Keratinocyte (primary cell): ENCODE measurements at regions of chr4 and their contacts with region 1.

Region 1: DNA sequence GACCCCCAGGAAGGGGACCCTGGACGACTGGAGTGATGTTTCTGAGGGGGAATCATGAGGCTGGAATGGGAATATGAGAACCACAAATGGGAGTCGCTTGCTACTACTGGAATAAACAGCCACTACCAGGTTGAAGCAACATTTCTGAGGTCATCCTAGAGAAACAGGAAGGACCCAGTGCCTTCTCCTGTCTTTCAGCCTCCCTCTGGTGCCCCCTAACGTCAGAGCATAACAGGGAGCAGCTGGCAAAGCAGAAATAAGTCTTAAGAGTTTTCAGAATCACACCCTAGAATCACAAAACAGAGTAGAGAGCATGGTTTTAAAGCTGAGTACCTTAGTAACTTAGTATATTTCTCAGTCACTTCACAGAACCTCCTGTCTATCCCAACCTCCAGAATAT is 347.8 kb upstream of the PITX2 start:
- DNase-seq: no peak
- H3K4me3 ChIP-seq: no peak overlapping the region
- H3K27ac ChIP-seq: no peak overlapping the region
- H3K4me1 ChIP-seq: no peaks in the 10 kb centered on the region
- H3K27me3 ChIP-seq: no peaks in the 10 kb centered on the region
- CTCF ChIP-seq: peak; percentile 38 to 56 (median 46)

Region 2: GRCh38 chr4:110631584-110632505 is 338.8 kb before region 1 on chr4:
- dilution Hi-C with region 1: loop called (anchors 25 kb)
- DNase-seq: no peak
- H3K4me3 ChIP-seq: peak overlapping the region in 2 of 3 experiments; percentile 27 to 44
- H3K27ac ChIP-seq: no peak overlapping the region
- H3K4me1 ChIP-seq: no peaks in the 10 kb centered on the region
- H3K27me3 ChIP-seq: peaks cover 92% of the 10 kb centered on the region
- CTCF ChIP-seq: peak; percentile 70 to 88 (median 70)